ENCODE measurements at regions of chr1 and their contacts with region 1.

Region 1: DNA sequence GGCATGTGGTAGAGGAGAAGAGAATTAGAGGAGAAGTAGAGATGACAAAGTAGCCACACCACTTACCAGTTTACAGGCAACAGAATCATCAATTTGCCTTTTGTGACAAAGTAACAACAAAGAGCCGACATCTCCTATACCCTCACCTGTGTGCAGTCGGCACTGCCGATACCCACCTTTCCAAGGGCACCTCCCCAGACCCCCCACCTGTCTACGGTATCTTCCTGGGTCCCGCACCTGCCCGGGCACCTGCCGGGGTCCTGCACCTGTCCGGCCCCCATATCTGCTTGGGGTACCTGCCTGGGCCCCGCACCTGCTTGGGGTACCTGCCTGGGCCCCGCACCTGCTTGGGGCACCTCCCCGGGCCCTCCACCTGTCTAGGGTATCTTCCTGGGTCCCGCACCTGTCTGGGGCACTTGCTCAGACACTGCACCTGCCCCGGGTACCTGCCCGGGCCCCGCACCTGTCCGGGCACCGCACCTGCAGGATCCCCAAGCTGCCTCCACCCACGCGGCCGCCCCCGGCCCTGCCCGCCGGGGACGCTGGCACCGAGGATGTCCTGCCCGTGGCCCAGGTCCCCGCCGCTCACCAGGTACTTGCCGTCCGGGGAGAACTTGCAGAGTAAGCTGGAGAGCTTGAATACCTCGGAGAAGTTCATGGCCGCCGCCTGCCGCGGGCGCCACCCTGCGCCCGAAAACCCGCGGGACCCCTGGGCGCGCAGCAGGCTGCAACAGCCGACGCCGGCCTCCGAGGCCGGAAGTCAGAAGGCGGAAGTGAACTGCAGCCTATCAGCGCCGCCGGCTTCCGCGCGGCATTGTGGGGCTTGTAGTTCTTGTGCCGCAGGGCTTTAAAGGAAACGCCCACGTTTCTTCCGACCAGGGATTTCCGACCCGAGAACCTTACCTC is at the start of gene WRAP73:
- DNase-seq: peak; percentile 87
- H3K4me3 ChIP-seq: peak within 1 kb of the TSS; percentile 44 to 55
- H3K27ac ChIP-seq: no peak within 1 kb of the TSS
- H3K4me1 ChIP-seq: peaks cover 0 to 28% of the 10 kb centered on the region in 2 donors
- H3K27me3 ChIP-seq: peaks cover 18 to 27% of the 10 kb centered on the region in 2 donors
- CTCF ChIP-seq: peak in 1 of 4 experiments; percentile 23
- POLR2A ChIP-seq: peak; percentile 70 to 79
- total RNA-seq, gene WRAP73: 4.6 to 31.7 (median 25.0) TPM

Region 2: DNA sequence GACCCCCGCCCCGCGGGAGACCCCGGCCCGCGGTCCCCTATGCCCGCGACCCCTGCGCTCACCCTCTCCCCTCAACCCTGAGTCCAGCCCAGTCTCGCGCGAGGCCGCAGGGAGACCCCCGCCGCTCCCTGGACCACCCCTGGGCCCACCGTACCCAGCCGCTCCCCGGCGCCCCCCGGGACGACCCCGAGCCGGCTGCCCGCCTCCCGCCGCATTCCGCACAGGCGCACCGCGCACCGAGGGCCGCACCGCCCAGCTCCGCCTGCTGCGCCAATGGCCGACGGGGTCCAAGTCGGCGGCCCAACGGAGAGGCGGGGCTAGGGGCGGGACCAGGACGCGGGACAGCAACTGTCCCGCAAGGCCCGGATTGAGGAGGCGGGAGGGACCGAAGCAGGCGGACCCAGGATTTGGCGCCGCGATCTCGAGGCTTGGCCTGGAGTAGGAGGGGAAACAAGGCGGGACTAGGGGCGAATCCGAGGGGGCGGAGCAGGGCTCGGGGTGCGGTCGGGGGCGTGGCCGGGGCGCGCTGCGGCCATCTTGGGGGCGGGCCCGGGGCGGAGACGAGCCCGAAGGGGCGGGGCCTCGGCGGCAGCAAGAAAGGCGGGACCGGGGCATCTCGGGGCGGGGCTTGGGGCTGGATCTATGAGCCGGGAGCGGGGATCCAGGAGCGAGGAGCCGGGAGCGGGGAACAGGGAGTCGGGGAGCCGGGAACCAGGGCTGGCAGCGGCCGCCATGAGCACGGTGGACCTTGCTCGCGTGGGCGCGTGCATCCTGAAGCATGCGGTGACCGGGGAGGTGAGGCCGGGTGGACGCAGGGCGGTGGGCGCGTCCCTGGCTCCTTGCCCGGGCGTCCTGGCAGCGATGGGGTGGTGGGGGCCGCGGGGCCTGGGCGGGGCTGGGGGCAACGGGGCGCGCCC is 1063.2 kb before region 1 on chr1 and contains the start of gene PRXL2B:
- intact Hi-C with region 1: loop called (anchors 10 kb)
- DNase-seq: peak; percentile 99
- H3K4me3 ChIP-seq: peak within 1 kb of the TSS; percentile 70 to 90
- H3K27ac ChIP-seq: peak within 1 kb of the TSS; percentile 95 to 98
- H3K4me1 ChIP-seq: peaks cover 0 to 4% of the 10 kb centered on the region in 2 donors
- H3K27me3 ChIP-seq: no peaks in the 10 kb centered on the region
- CTCF ChIP-seq: peak in 2 of 4 experiments; percentile 12 to 22
- POLR2A ChIP-seq: peak; percentile 94 to 95
- total RNA-seq, gene PRXL2B: 0.51 to 20.5 (median 13.2) TPM

Region 3: DNA sequence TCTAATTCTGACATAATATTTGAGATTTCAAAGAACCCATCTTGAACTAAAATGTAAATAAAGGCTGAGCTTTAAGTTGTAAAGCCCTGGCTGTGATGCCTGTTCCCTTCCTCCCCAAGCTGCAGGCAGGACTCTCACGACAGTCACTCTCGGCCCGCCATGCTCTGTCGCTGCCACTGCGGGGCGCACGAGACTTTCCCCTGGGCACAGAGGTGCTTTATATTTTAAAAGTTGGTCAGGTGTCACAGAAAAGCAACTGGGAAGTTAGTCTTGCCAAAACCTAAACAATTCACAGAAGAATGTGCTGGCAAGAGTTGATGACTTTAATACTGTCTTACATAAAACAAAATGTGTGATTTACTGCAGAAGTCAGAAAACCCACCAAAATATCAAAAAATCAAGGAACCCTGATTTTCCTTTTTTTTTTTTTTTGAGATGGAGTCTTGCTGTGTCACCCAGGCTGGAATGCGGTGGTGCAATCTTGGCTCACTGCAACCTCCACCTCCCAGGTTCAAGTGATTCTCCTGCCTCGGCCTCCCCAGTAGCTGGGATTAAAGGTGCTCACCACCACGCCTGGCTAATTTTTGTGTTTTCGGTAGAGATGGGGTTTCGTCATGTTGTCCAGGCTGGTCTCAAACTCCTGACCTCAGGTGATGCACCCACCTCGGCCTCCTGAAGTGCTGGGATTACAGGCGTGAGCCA is 136.0 kb after region 1 on chr1:
- intact Hi-C with region 1: no loop called
- DNase-seq: no peak
- H3K4me3 ChIP-seq: no peak overlapping the region
- H3K27ac ChIP-seq: no peak overlapping the region
- H3K4me1 ChIP-seq: peaks cover 0 to 4% of the 10 kb centered on the region in 2 donors
- H3K27me3 ChIP-seq: no peaks in the 10 kb centered on the region
- CTCF ChIP-seq: no peak
- POLR2A ChIP-seq: no peak

Region 4: DNA sequence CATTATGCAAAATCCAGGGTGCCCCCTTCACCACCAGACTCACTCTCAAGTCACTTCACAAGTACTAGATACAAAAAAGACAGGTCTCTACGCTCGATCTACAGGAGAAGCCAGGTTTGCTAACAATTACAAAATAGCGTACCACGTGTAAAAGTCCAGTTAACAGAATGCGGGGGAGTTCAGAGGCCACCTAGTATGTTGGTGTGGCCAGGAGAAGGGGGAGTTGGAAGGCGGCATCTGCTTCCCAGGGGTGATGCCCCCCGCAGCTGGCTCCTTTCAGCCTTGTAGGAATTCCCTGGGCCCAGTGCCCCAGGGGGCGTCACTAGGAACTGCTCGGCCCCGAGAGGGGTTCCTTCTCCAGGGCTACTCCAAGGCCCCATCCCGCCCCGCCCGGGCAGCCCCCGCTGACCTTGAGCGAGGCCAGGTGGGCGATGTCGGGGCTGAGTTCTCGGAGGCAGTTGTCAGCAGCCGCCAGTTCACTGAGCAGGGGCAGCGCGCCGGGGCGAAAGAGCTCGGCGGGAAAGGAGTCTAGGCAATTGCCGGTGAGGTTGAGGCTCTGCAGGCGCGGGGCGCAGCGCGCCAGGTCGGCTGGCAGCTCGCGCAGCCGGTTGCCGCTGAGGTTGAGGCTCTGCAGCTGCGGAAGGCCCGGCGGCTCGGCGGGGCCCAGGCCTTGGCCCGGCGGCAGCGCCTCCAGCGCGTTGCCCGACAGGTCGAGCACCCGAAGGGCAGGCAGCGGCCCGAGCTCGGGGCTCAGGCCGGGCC is 146.0 kb after region 1 on chr1:
- intact Hi-C with region 1: no loop called
- DNase-seq: no peak
- H3K4me3 ChIP-seq: peak overlapping the region; percentile 63 to 96
- H3K27ac ChIP-seq: peak overlapping the region in 1 of 2 donors; percentile 54
- H3K4me1 ChIP-seq: peaks cover 0 to 18% of the 10 kb centered on the region in 2 donors
- H3K27me3 ChIP-seq: no peaks in the 10 kb centered on the region
- CTCF ChIP-seq: no peak
- POLR2A ChIP-seq: no peak